Tibial artery (tissue), 4 donors: ENCODE measurements at regions of chr6 and their contacts with region 1.

Region 1: GRCh38 chr6:1596088-1596852 is 13.4 kb upstream of the FOXC1 start:
- DNase-seq: peak in 1 of 2 donors; percentile 80
- H3K4me3 ChIP-seq: peak overlapping the region; percentile 20 to 40
- H3K27ac ChIP-seq: no peak overlapping the region
- H3K4me1 ChIP-seq: peaks cover 0 to 9% (median 2%) of the 10 kb centered on the region in 4 donors
- H3K27me3 ChIP-seq: peaks cover 0 to 9% of the 10 kb centered on the region in 2 donors
- CTCF ChIP-seq: peak; percentile 94 to 96

Region 2: DNA sequence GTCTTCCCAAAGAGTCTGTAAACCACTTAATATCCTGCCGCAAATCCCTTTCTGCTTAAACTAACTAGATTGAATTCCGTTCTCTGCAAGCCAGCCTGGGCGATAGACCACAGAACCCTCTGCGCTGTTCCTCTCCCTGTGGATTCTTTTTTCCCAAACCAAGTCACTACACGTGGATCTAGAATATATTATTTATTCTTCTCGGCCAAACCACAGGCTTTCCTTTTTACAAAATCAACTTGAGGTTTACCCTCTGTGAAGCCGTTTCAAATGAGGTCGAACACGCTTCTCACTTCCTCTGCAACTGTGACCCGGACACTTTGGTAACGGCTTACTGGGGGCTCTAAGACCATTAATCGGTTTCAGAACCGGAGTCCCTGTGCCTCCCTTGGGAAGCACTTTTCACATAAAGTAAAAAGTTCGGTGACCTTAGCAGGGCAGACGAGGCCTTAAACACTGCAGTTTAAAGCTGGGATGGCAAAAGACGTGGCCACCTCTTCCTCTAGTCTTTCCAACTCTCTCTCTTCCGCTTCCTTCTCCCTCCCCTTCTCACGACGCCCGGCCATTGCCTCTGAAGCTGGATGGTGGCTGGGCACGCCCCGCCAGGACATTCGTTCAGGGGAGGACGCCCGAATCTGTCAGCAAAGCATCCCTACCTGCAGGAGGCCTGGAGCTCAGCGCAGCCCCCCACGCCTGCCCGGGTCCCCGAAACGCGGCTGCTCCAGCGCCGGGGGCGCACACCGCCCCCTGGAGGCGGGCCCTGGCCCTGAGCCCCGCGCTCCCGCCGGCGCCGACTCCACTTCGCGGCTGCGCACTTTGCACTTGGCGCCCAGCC is 41.6 kb before region 1 on chr6:
- intact Hi-C with region 1: no loop called
- DNase-seq: peak; percentile 70 to 84
- H3K4me3 ChIP-seq: peak overlapping the region; percentile 63 to 83
- H3K27ac ChIP-seq: peak overlapping the region; percentile 80 to 81
- H3K4me1 ChIP-seq: peaks cover 0 to 14% (median 8%) of the 10 kb centered on the region in 4 donors
- H3K27me3 ChIP-seq: no peaks in the 10 kb centered on the region
- CTCF ChIP-seq: peak; percentile 83 to 88

Region 3: DNA sequence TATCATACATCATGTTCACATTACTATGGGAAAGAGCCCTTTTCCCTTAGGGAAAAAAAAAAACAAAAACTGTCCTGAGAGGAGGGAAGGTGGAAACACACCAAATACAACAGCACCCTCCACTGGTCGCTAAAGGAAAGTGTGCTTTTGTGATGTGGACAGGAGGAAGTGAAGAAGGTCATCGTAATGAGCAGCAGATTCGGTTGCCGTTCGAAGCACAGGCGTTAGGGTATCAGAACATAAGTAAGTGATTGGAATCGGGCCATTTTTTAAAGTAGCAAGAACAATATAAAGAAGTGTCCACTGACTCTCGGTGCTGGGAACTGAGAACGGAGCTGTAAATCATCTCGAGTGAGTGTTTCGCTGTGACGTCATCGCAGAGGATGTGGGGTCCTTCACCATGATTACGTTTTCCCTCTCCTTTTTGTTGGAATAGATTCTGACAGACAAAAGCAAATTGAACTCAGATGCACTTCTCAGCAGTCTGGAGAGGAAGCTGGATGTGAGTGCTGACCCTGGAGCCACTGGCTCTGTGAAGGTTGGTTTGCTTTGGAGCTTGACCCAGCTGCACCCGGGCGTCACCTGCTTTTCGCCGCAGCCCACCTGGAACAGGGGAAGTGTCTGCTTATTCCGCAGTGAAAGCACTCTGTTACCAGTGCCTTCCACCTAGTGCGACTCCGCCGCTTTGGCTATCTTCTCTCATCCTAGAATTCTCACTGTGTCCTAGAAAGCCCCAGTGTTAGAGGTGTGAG is 852.7 kb after region 1 on chr6:
- intact Hi-C with region 1: loop called (anchors 2 kb)
- DNase-seq: peak in 1 of 2 donors; percentile 40
- H3K4me3 ChIP-seq: peak overlapping the region; percentile 35 to 47
- H3K27ac ChIP-seq: peak overlapping the region; percentile 25 to 38
- H3K4me1 ChIP-seq: peaks cover 0 to 16% (median 5%) of the 10 kb centered on the region in 4 donors
- H3K27me3 ChIP-seq: no peaks in the 10 kb centered on the region
- CTCF ChIP-seq: peak; percentile 76 to 79

Region 4: GRCh38 chr6:2695454-2696095 is 1099.3 kb after region 1 on chr6:
- intact Hi-C with region 1: loop called (anchors 5 kb)
- DNase-seq: no peak
- H3K4me3 ChIP-seq: no peak overlapping the region
- H3K27ac ChIP-seq: no peak overlapping the region
- H3K4me1 ChIP-seq: no peaks in the 10 kb centered on the region
- H3K27me3 ChIP-seq: no peaks in the 10 kb centered on the region
- CTCF ChIP-seq: peak; percentile 33 to 37

Region 5: GRCh38 chr6:2749969-2750600 is 1153.8 kb after region 1 on chr6:
- intact Hi-C with region 1: loop called (anchors 5 kb)
- DNase-seq: peak in 1 of 2 donors; percentile 74
- H3K4me3 ChIP-seq: peak overlapping the region; percentile 9 to 31
- H3K27ac ChIP-seq: no peak overlapping the region
- H3K4me1 ChIP-seq: peaks cover 0 to 6% (median 0%) of the 10 kb centered on the region in 4 donors
- H3K27me3 ChIP-seq: no peaks in the 10 kb centered on the region
- CTCF ChIP-seq: peak; percentile 74 to 86